ENCODE measurements at regions of chr9 and their contacts with region 1.

Region 1: GRCh38 chr9:27654629-27655285 is 81.5 kb upstream of the C9orf72 start:
- DNase-seq: no peak
- H3K4me3 ChIP-seq: peak overlapping the region in 1 of 2 donors; percentile 1
- H3K27ac ChIP-seq: no peak overlapping the region
- H3K4me1 ChIP-seq: no peaks in the 10 kb centered on the region
- H3K27me3 ChIP-seq: no peaks in the 10 kb centered on the region
- CTCF ChIP-seq: no peak
- POLR2A ChIP-seq: no peak

Region 2: DNA sequence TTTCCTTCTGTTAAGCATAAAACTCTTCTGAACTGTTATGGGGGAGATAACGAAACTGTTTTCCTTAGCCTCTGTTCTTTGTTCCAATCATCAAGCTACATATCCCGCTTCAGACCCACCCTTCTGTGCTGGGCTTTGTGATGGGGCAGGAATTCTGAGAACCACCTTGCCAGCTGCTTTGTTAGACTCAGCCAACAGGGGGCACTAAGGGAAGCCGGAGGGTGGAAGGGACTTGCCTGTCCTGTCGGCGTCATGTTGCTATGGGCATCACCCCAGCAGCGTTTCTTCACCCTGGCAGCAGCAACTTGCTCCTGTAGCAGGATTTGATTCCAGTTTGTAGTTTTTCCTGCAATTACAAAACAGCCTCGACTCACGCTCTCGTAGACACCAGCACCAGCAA is 931.3 kb before region 1 on chr9:
- intact Hi-C with region 1: loop called (anchors 5 kb)
- DNase-seq: peak; percentile 54
- H3K4me3 ChIP-seq: no peak overlapping the region
- H3K27ac ChIP-seq: no peak overlapping the region
- H3K4me1 ChIP-seq: no peaks in the 10 kb centered on the region
- H3K27me3 ChIP-seq: no peaks in the 10 kb centered on the region
- CTCF ChIP-seq: peak in 2 of 3 experiments; percentile 14 to 25
- POLR2A ChIP-seq: no peak

Region 3: DNA sequence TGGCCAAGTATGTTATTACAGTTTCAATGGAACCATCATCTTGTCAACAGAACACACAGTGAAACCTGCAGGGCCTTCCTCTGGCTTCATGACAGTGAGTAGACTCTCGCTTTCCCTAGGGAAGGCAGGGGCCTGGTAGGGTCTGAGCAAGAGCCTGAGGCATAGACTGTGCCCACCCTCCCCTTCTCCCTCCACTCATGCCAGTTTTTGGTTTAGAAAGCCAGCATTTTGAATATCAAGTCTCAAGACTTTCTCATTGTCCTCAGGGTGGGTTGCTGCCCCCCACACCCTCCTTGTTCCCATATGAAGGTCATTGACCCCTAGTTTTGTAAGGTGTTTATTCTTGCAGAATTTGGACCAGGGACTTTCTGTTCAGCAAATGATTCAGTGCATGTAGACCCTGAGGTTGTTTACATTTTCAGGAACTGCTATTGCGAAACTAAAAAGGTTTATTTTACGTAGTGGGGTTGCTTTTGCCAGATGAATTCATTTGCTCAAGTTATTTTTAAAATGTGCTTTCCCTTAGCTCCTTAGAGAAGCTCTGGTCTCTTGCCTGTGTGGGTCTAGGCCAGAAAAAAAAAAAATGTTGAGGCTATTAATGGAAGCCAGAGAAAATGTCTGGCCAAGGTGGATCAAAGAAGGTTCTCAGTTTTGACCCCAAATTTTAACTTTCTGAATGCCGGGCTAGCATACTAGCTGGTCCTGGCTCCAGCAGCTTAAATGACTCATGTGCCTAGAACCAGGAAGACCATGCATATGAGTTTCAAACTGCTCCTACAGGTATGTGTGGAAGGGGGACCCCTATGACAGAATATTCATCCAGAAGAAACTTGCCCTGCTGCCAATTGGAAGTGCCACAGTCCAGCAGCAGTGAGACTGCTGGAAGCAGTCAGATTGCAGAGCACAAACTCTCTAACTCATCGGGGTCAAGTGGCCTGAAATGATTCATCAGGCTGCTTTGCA is 115.0 kb before region 1 on chr9:
- intact Hi-C with region 1: no loop called
- DNase-seq: no peak
- H3K4me3 ChIP-seq: no peak overlapping the region
- H3K27ac ChIP-seq: peak overlapping the region; percentile 46 to 81
- H3K4me1 ChIP-seq: peaks cover 14% of the 10 kb centered on the region
- H3K27me3 ChIP-seq: no peaks in the 10 kb centered on the region
- CTCF ChIP-seq: no peak
- POLR2A ChIP-seq: no peak

Measured in testis (tissue), 5 donors.